ENCODE measurements at regions of chr7 and their contacts with region 1.

Region 1: DNA sequence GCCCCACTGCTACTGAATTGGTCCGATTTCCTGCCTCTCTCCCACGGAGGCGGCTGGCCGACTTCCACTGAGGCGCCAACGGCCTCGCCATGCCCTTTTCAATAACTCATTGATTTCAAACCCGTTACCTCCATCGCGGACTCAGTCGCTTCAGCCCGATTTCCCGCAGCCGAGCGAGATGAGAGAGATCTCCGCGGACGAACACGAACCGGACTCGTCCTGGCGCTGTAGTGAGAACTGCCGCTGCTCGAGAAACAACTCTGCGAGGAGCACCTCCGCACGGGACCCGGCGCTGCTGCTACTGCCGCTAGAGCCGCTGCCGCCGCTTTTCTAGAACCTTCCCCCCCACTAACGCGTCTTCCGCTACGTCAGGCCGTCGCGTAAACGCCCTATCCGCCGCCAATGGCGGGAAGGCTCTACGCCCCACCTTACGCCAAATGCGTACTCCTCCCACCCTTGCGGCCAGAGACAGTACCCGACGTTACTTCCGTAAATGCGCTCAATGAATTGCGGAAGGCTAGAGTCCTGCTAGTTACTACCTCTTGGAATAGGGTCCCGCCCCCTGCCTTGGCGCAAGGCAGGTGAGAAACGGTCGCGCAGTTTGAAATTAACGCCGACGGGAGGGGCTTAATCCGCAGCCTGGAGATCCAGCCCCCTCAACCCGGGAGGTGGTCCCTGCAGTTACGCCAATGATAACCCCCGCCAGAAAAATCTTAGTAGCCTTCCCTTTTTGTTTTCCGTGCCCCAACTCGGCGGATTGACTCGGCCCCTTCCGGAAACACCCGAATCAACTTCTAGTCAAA is at the start of gene HNRNPA2B1:
- DNase-seq: peak; percentile 93 to 99 (median 97)

Region 2: GRCh38 chr7:25913598-25914224 is 286.9 kb before region 1 on chr7:
- intact Hi-C with region 1: no loop called
- DNase-seq: no peak

Region 3: GRCh38 chr7:26083113-26083512 is 117.5 kb before region 1 on chr7:
- intact Hi-C with region 1: loop called (anchors 10 kb)
- DNase-seq: no peak

Region 4: DNA sequence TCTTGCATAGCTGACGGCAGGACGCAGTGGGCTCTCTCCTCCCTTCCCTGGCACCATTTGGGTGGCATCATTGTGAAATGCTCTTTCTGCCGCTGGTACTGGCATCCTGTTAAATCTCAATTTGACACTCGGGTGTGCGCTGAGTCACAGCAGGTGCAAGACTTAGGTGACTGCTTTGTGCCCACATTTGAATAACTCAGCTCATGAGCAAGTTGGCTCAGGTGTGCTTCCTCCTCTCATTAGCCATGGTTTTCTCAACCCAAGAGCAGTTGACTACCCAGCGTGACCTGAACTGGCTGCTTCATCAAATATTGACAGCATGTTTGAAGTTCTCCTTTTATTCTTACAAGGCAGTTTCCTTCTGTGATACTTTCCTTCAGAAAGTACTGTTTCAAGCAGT is 73.2 kb before region 1 on chr7:
- intact Hi-C with region 1: no loop called
- DNase-seq: peak in 28 of 42 donors; percentile 7 to 62 (median 28)

Region 5: DNA sequence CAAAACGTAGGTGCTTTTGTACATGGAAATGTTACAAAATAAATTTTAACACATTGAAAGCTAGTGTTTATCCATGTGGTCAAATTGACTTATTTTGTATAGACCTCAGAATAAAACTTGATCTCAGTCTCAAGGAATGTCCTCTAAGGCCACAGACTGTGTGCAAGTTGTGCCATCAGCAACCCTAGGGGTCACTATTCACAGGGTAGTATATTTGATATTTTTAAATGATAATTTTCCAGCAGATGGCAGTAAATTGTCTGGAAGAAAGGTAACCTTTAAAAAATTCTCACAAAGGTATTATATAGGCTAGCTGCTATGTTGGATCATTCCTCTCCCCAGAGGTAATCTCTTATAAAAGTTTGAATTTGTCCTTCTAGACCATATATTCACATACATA is 78.1 kb after region 1 on chr7:
- intact Hi-C with region 1: no loop called
- DNase-seq: peak in 1 of 42 donors; percentile 18

Region 6: GRCh38 chr7:26291699-26292538 is 91.3 kb after region 1 on chr7 and contains the start of gene SNX10:
- intact Hi-C with region 1: loop called (anchors 5 kb)
- DNase-seq: peak in 40 of 42 donors; percentile 12 to 80 (median 58)